ENCODE measurements at regions of chr2 and their contacts with region 1.

Region 1: DNA sequence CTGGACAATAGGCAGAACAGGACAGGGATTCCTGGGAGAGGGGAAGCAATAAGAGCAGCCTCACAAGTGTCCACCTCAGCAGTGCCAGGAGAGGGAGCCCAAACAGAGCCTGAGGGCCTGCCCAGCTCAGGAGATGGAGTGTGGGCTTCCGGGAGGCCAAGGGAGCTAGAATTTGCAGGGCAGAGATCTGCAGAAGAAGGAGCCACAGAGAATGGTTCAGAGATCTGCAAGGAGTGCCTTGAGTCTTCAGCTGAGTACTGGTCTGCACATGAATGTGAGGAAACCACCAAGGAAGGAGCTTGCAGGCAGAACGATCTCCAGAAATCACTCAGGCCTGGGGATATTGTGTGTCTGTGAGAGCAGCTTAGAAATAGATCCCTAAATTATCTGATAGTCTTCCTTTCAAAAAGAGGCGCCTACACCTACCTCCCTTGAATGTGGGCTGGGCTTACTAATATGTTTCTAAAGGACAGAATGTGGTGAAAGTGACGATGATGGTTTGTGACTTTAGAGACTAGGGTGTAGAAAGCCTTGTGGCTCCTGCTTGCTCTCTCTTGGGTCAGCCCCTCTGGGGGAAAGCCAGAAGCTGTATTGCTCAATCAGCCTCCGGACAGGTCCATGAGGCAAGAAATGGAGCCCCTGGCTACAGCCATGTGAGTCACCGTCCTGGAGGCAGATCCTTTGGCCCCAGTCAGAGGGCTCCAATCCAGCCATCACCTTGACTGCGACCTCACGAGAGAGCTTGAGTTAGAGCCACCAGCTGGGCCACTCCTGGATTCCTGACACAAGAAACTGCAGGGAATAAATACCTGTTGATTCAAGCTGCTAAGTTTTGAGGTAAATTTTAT is 7.6 kb upstream of the LPIN1 start:
- DNase-seq: peak; percentile 87
- ATAC-seq: peak; percentile 86
- H3K4me3 ChIP-seq: no peak overlapping the region
- H3K27ac ChIP-seq: no peak overlapping the region
- H3K4me1 ChIP-seq: peaks cover 3% of the 10 kb centered on the region; the same call in 1 of the 2 replicates
- H3K27me3 ChIP-seq: peaks cover 12% of the 10 kb centered on the region
- CTCF ChIP-seq: peak; percentile 59
- POLR2A ChIP-seq: no peak
- RAD21 ChIP-seq: peak; percentile 70

Region 2: GRCh38 chr2:11778923-11779757 is 40.3 kb after region 1 on chr2:
- CTCF ChIA-PET with region 1: interaction called, 7 read pairs
- POLR2A ChIA-PET with region 1: no interaction called
- dilution Hi-C with region 1: no loop called
- in situ Hi-C with region 1: no loop called
- intact Hi-C with region 1: loop called (anchors 1 kb)
- DNase-seq: peak; percentile 48
- ATAC-seq: peak; percentile 92
- H3K4me3 ChIP-seq: no peak overlapping the region
- H3K27ac ChIP-seq: no peak overlapping the region
- H3K4me1 ChIP-seq: peaks cover 5% of the 10 kb centered on the region
- H3K27me3 ChIP-seq: no peaks in the 10 kb centered on the region
- CTCF ChIP-seq: peak; percentile 97
- POLR2A ChIP-seq: no peak
- RAD21 ChIP-seq: peak; percentile 95

Region 3: DNA sequence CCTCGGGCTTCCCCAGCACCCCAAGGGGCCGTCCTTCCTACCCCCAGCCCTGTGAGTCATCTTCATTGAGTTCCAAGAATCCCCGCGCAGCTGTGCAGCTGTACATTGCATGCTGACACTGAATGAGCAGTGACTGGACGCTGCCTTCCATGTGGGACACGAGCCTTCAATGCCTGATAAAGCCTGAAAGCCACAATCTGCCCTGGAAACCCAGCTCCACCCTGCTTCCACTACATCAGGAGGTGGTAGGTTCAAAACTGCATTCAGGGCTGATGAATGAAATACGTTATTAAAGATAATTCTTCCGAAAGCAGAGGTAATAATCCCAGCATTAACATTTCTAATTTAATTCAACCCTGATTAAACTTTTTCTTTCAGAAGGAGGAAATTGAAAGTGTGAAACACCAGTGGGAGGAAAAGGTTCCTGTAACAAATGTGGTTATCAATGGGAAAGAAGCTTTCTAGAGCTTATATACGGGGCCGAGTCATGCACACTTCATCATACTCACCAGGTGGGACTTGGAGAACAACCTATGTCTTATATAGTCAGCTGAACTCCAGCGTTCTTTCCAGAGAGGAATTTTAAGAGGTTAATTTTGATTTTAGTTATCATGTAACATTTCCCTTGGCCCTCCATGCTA is 367.7 kb after region 1 on chr2:
- CTCF ChIA-PET with region 1: no interaction called
- POLR2A ChIA-PET with region 1: no interaction called
- dilution Hi-C with region 1: no loop called
- in situ Hi-C with region 1: no loop called
- intact Hi-C with region 1: no loop called
- DNase-seq: peak; percentile 99
- ATAC-seq: peak; percentile 97
- H3K4me3 ChIP-seq: no peak overlapping the region
- H3K27ac ChIP-seq: no peak overlapping the region
- H3K4me1 ChIP-seq: peaks cover 12% of the 10 kb centered on the region
- H3K27me3 ChIP-seq: no peaks in the 10 kb centered on the region
- CTCF ChIP-seq: no peak
- POLR2A ChIP-seq: no peak
- RAD21 ChIP-seq: peak; percentile 42

Measured in IMR-90 (cell line).